A549 (cell line): ENCODE measurements at regions of chr14 and their contacts with region 1.

Region 1: DNA sequence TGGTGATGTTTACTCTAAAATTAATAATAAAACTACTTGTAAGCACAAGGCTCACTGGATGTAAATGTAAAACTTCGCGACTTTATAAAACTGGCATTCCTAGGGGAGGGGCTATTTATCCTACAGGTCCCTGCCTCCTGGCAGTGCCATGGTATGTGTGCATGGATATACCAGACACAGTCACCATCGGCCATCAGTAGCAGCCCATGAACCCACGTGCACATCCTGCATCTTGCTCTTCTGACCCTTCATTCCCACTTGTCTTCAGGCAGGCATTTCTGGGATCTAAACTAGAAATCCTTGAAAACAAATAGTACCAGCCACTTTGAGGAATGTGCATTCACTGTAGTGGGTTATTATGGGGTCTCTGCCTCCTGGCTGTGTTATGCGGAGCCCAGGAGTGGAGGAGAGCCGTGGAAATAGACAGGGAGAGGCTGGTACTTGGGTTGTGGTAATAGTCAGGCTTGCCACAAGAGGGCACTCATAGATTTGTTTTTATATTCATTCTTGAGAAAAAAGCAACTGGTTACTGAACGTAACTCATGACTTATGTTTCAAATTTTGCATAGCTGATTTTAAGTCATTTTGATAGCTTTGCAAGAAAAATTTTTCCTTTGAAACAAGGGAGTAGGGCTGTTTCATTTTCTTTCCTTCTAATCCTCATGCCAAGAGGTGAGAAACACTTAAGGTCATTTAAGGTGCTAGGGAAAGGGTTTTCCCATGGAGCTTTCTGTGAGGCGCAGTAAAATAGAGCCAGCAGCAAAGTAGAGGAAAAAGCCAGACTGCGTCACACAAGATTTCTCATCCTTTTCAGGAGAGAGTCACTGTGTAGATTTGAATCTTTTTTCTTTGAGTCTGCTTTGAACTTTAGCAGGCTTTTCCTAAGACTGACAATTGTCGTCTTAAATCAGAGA is 17.4 kb upstream of the GALNT16 start:
- DNase-seq: peak; percentile 69 to 76
- ATAC-seq: peak; percentile 84 to 94
- H3K4me3 ChIP-seq: no peak overlapping the region
- H3K27ac ChIP-seq: no peak overlapping the region
- H3K4me1 ChIP-seq: no peaks in the 10 kb centered on the region; the same call in 2 of the 3 replicates
- CTCF ChIP-seq: peak; percentile 83
- EP300 ChIP-seq: no peak
- POLR2A ChIP-seq: no peak
- RAD21 ChIP-seq: peak; percentile 78 to 84

Region 2: GRCh38 chr14:68695326-68695768 is 547.2 kb before region 1 on chr14:
- CTCF ChIA-PET with region 1: no interaction called
- POLR2A ChIA-PET with region 1: no interaction called
- DNase-seq: peak; percentile 92 to 97
- ATAC-seq: peak; percentile 94 to 96
- H3K4me3 ChIP-seq: no peak overlapping the region
- H3K27ac ChIP-seq: peak overlapping the region; percentile 86 to 94
- H3K4me1 ChIP-seq: peaks cover 34% of the 10 kb centered on the region
- CTCF ChIP-seq: no peak
- EP300 ChIP-seq: peak; percentile 84 to 90; a peak in 4 of 5 replicates
- POLR2A ChIP-seq: no peak
- RAD21 ChIP-seq: peak; percentile 40 to 64

Region 3: GRCh38 chr14:69129264-69129880 is 113.2 kb before region 1 on chr14:
- CTCF ChIA-PET with region 1: interaction called, 11 read pairs
- POLR2A ChIA-PET with region 1: no interaction called
- DNase-seq: peak; percentile 79 to 83
- ATAC-seq: peak; percentile 91 to 95
- H3K4me3 ChIP-seq: no peak overlapping the region
- H3K27ac ChIP-seq: peak overlapping the region; percentile 52 to 72; a peak in 4 of 6 replicates
- H3K4me1 ChIP-seq: peaks cover 34% of the 10 kb centered on the region
- CTCF ChIP-seq: peak; percentile 95
- EP300 ChIP-seq: no peak
- POLR2A ChIP-seq: no peak
- RAD21 ChIP-seq: peak; percentile 79 to 88

Region 4: DNA sequence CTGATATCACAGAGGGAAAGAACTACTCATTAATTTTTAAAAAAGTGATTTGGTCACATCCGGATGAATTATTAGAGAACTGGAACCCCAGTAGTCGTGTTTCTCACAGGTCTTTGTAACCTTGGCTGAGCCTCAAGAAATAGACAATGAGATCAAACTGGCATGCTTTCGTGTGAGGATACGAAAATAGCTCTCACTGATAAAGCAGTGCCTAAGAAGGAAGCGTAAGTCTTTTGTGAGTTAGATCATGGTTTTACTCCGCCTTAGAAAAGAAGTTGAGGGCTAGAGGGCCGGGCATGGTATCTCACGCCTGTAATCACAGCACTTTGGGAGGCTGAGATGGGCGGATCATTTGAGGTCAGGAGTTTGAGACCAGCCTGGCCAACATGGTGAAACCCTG is 16.4 kb before region 1 on chr14:
- CTCF ChIA-PET with region 1: interaction called, 12 read pairs
- POLR2A ChIA-PET with region 1: no interaction called
- DNase-seq: no peak
- ATAC-seq: no peak
- H3K4me3 ChIP-seq: no peak overlapping the region
- H3K27ac ChIP-seq: no peak overlapping the region
- H3K4me1 ChIP-seq: no peaks in the 10 kb centered on the region
- CTCF ChIP-seq: no peak
- EP300 ChIP-seq: no peak
- POLR2A ChIP-seq: no peak
- RAD21 ChIP-seq: no peak

Region 5: DNA sequence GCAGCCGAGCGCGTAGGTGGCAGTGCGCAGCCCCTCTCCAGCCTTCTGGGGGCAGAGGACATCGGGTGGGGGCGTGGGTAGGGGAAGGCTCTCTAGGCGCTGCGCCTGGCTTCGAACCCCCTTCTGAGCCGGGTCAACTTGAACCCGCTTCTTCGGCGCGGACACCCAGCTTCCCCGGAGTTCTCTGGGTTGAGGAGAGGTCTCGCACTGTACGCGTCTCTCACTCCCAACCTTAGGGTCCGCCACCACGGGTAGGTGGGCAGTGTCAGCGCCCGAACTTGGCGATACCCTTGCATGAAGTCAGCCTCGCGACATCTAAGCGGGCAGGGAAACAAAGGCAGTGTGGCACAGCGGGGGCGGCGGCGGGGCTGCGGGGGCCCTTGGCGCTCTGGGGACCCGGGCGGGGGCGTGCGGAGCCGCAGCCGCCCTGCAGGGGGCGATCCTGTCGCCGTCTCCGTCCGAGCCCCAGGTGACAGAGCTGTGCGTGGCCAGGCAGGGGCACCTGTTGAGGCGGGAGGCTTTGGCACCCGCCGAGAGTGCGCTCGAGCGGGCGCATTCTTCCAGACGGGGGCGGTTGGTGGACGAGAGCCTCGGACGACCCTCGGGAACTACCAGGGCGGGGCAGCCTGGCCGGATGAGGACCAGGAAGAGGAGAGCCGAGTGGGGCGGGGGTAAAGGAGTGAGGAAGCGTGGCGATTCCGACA is 18.4 kb after region 1 on chr14:
- CTCF ChIA-PET with region 1: interaction called, 53 read pairs
- POLR2A ChIA-PET with region 1: no interaction called
- DNase-seq: peak; percentile 43 to 72
- ATAC-seq: peak; percentile 63 to 81
- H3K4me3 ChIP-seq: peak overlapping the region; percentile 62
- H3K27ac ChIP-seq: peak overlapping the region in 1 of 2 experiments; percentile 79; a peak in 4 of 6 replicates
- H3K4me1 ChIP-seq: peaks cover 3% of the 10 kb centered on the region; the same call in 1 of the 3 replicates
- CTCF ChIP-seq: peak; percentile 68
- EP300 ChIP-seq: no peak
- POLR2A ChIP-seq: no peak
- RAD21 ChIP-seq: peak; percentile 33 to 64; a peak in 4 of 5 replicates

Region 6: DNA sequence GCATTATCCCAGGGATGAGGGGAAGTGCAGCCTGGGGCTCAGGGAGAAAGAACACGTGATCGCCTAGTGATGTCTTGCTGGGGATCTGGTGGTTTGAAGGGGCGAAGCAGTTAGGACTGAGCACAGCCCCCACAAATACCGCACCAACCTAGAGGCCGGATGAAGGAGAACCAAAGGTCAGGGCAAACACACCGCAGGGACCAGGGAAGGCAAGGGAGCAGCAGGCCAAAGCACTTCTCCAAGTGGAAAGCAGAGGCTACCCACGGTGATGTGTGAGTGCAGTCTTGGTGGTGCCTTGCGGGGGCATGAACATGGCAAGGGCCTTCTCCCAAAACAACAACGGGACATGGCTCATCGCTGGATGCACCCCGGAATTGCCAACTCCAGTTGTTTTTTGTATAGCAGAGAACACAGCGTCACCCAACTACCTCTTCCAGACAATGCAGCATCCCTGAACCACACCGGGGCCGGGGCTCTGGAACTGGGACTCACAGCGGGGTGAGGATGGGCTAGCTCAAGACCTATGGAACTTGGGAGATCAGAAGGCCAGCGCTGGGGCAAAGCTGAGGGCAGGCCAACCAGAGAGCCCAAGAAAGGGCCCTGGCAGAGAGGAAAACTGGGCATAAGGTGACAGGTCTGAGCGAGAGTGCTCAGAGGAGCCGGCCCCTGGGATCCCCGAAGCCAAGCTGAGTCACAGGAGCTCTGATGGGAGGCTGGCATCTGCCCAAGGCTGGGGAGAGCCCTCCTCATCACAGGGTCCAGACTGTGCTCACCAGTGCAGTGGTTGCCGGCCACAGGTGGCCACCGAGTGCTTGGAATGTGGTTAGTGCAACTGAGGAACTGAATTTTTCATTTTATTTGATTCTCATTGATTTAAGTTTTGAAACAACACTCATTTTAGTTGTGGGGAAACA is 28.5 kb after region 1 on chr14:
- CTCF ChIA-PET with region 1: interaction called, 11 read pairs
- POLR2A ChIA-PET with region 1: no interaction called
- DNase-seq: no peak
- ATAC-seq: peak in 1 of 2 experiments; percentile 61; a peak in 4 of 6 replicates
- H3K4me3 ChIP-seq: no peak overlapping the region
- H3K27ac ChIP-seq: no peak overlapping the region
- H3K4me1 ChIP-seq: no peaks in the 10 kb centered on the region
- CTCF ChIP-seq: no peak
- EP300 ChIP-seq: no peak
- POLR2A ChIP-seq: no peak
- RAD21 ChIP-seq: no peak

Region 7: DNA sequence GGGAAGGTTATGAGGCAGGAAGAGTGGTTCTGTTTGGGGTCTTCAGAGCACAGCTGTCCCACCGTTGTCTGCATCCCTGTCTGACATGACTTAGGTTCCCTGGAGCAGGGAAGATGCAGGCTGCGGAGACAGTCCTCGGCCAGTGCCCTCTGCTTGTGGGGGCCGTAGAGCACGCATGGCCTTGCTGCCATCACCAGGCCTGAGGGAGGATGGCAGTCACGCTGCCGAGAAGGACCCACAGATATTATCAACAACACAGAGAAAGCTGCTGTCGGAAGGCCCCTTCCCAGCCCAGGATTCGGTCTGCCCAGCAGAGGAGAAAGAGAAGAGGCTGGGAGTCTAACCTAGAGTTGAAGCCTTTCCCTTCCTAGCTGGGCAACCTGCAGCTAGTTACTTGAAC is 120.5 kb after region 1 on chr14:
- CTCF ChIA-PET with region 1: interaction called, 15 read pairs
- POLR2A ChIA-PET with region 1: no interaction called
- DNase-seq: peak in 1 of 2 experiments; percentile 14
- ATAC-seq: peak; percentile 37 to 68; a peak in 3 of 6 replicates
- H3K4me3 ChIP-seq: no peak overlapping the region
- H3K27ac ChIP-seq: no peak overlapping the region
- H3K4me1 ChIP-seq: no peaks in the 10 kb centered on the region
- CTCF ChIP-seq: no peak
- EP300 ChIP-seq: no peak
- POLR2A ChIP-seq: no peak
- RAD21 ChIP-seq: peak; percentile 23 to 54; a peak in 3 of 5 replicates

Region 8: GRCh38 chr14:69460093-69460701 is 217.6 kb after region 1 on chr14:
- CTCF ChIA-PET with region 1: interaction called, 95 read pairs
- POLR2A ChIA-PET with region 1: no interaction called
- DNase-seq: peak; percentile 79 to 85
- ATAC-seq: peak; percentile 98
- H3K4me3 ChIP-seq: no peak overlapping the region
- H3K27ac ChIP-seq: no peak overlapping the region
- H3K4me1 ChIP-seq: no peaks in the 10 kb centered on the region
- CTCF ChIP-seq: peak; percentile 84
- EP300 ChIP-seq: no peak
- POLR2A ChIP-seq: no peak
- RAD21 ChIP-seq: peak; percentile 75 to 80